Activated T-helper 1 cell treated with anti-CD3 and anti-CD28 coated beads, Interleukin-12 subunit alpha, Interleukin-12 subunit beta, Interleukin-2, Interleukin-4 antibody, amounts not matched to agents 30 ng/mL and 10 ng/mL and 1 ng/mL, durations not matched to agents 14 hours and 24 hours and 36 hours (primary cell): ENCODE measurements at regions of chr10 and their contacts with region 1.

Region 1: GRCh38 chr10:58531084-58531695 is 18.5 kb downstream of the BICC1 start:
- DNase-seq: peak; percentile 17
- H3K4me3 Mint-ChIP-seq: no peak overlapping the region
- H3K27ac Mint-ChIP-seq: no peak overlapping the region
- H3K4me1 Mint-ChIP-seq: no peaks in the 10 kb centered on the region
- H3K27me3 Mint-ChIP-seq: peaks cover 9% of the 10 kb centered on the region

Region 2: GRCh38 chr10:58299580-58299979 is 231.6 kb before region 1 on chr10:
- intact Hi-C with region 1: loop called (anchors 1 kb)
- DNase-seq: peak; percentile 25
- H3K4me3 Mint-ChIP-seq: no peak overlapping the region
- H3K27ac Mint-ChIP-seq: no peak overlapping the region
- H3K4me1 Mint-ChIP-seq: peaks cover 4% of the 10 kb centered on the region
- H3K27me3 Mint-ChIP-seq: peaks cover 12% of the 10 kb centered on the region

Region 3: GRCh38 chr10:59234816-59235429 is 703.7 kb after region 1 on chr10:
- intact Hi-C with region 1: loop called (anchors 5 kb)
- DNase-seq: no peak
- H3K4me3 Mint-ChIP-seq: no peak overlapping the region
- H3K27ac Mint-ChIP-seq: no peak overlapping the region
- H3K4me1 Mint-ChIP-seq: no peaks in the 10 kb centered on the region
- H3K27me3 Mint-ChIP-seq: peaks cover 2% of the 10 kb centered on the region